ENCODE measurements at regions of chr20 and their contacts with region 1.

Region 1: GRCh38 chr20:40990542-40991120 is 38.0 kb upstream of the TOP1 start:
- DNase-seq: peak; percentile 71
- ATAC-seq: peak; percentile 20
- H3K4me3 ChIP-seq: no peak overlapping the region
- H3K4me3 Mint-ChIP-seq: peak overlapping the region; percentile 86
- H3K27ac ChIP-seq: peak overlapping the region; percentile 35 to 51
- H3K27ac Mint-ChIP-seq: peak overlapping the region; percentile 99
- H3K4me1 ChIP-seq: peaks cover 43 to 48% of the 10 kb centered on the region in 2 donors
- H3K4me1 Mint-ChIP-seq: peaks cover 51% of the 10 kb centered on the region
- H3K27me3 ChIP-seq: no peaks in the 10 kb centered on the region
- H3K27me3 Mint-ChIP-seq: no peaks in the 10 kb centered on the region
- CTCF ChIP-seq: peak; percentile 53

Region 2: DNA sequence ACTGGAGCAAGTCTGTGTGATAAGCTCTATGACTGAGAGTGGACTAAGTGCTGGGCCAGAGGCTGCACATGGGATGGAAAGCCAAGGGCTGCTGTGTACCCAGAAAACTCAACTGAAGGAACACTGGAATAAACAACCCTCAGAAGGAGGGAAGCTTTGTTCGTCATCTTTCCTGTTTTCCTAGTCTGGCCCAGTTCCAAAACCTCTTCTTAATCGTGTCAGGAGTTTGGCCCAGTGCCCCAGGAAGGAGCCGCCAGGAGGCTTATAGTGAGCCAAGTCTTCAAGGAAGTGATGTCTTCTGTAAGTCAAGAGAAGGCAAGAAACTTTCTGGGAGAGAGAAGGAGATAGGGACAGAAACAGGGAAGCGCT is 14.7 kb after region 1 on chr20:
- CTCF ChIA-PET with region 1: interaction called, 36 read pairs
- POLR2A ChIA-PET with region 1: interaction called, 7 read pairs
- intact Hi-C with region 1: no loop called
- DNase-seq: no peak
- ATAC-seq: no peak
- H3K4me3 ChIP-seq: no peak overlapping the region
- H3K4me3 Mint-ChIP-seq: no peak overlapping the region
- H3K27ac ChIP-seq: no peak overlapping the region
- H3K27ac Mint-ChIP-seq: no peak overlapping the region
- H3K4me1 ChIP-seq: peaks cover 17 to 26% of the 10 kb centered on the region in 2 donors
- H3K4me1 Mint-ChIP-seq: peaks cover 33% of the 10 kb centered on the region
- H3K27me3 ChIP-seq: no peaks in the 10 kb centered on the region
- H3K27me3 Mint-ChIP-seq: no peaks in the 10 kb centered on the region
- CTCF ChIP-seq: no peak

Region 3: DNA sequence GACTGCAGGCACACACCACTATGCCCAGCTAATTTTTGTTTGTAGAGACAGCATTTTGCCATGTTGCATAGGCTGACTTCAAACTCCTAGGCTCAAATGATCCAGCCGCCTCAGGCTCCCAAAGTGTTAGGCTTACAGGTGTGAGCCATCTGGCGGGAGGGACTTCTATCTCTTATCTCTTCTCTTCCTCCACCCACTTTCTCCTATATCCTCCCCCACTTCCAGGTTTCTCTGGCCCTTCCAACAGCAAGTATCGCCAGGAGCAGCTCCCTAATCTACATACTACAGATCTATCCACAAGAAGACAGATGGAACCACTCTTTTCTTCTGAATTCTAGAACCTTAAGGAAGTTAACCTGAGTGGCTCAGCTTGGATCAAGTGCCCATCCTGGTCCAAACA is 32.9 kb after region 1 on chr20:
- CTCF ChIA-PET with region 1: interaction called, 19 read pairs
- POLR2A ChIA-PET with region 1: interaction called, 6 read pairs
- intact Hi-C with region 1: loop called (anchors 1 kb)
- DNase-seq: no peak
- ATAC-seq: no peak
- H3K4me3 ChIP-seq: no peak overlapping the region
- H3K4me3 Mint-ChIP-seq: no peak overlapping the region
- H3K27ac ChIP-seq: no peak overlapping the region
- H3K27ac Mint-ChIP-seq: no peak overlapping the region
- H3K4me1 ChIP-seq: peaks cover 6 to 9% of the 10 kb centered on the region in 2 donors
- H3K4me1 Mint-ChIP-seq: peaks cover 13% of the 10 kb centered on the region
- H3K27me3 ChIP-seq: no peaks in the 10 kb centered on the region
- H3K27me3 Mint-ChIP-seq: no peaks in the 10 kb centered on the region
- CTCF ChIP-seq: no peak

Region 4: DNA sequence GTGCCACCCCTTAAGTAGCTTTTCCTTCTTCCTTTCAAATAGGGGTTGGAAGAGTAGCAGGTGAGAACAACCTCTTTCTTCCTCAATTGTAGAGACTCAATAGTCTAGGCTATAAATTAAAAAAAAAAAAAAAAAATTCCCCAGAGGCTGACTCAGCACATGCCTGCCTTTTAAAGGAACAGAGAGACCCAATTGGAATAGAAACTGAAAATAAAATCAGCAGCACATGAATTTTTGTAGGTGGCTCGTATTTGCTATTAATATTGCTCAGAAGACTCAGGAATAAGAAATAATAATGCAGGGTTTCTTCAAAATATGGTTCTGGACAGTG is 57.3 kb after region 1 on chr20:
- CTCF ChIA-PET with region 1: interaction called, 71 read pairs
- POLR2A ChIA-PET with region 1: interaction called, 4 read pairs
- intact Hi-C with region 1: loop called (anchors 1 kb)
- DNase-seq: peak; percentile 75
- ATAC-seq: peak; percentile 73
- H3K4me3 ChIP-seq: peak overlapping the region in 3 of 5 experiments; percentile 24 to 48 (median 27)
- H3K4me3 Mint-ChIP-seq: peak overlapping the region; percentile 80
- H3K27ac ChIP-seq: peak overlapping the region; percentile 3 to 14
- H3K27ac Mint-ChIP-seq: peak overlapping the region; percentile 80
- H3K4me1 ChIP-seq: peaks cover 56 to 62% of the 10 kb centered on the region in 2 donors
- H3K4me1 Mint-ChIP-seq: peaks cover 80% of the 10 kb centered on the region
- H3K27me3 ChIP-seq: no peaks in the 10 kb centered on the region
- H3K27me3 Mint-ChIP-seq: no peaks in the 10 kb centered on the region
- CTCF ChIP-seq: no peak

Region 5: GRCh38 chr20:41086402-41087338 is 96.0 kb after region 1 on chr20:
- CTCF ChIA-PET with region 1: interaction called, 174 read pairs
- POLR2A ChIA-PET with region 1: no interaction called
- intact Hi-C with region 1: no loop called
- DNase-seq: no peak
- ATAC-seq: no peak
- H3K4me3 ChIP-seq: no peak overlapping the region
- H3K4me3 Mint-ChIP-seq: no peak overlapping the region
- H3K27ac ChIP-seq: no peak overlapping the region
- H3K27ac Mint-ChIP-seq: peak overlapping the region; percentile 16
- H3K4me1 ChIP-seq: no peaks in the 10 kb centered on the region
- H3K4me1 Mint-ChIP-seq: no peaks in the 10 kb centered on the region
- H3K27me3 ChIP-seq: no peaks in the 10 kb centered on the region
- H3K27me3 Mint-ChIP-seq: no peaks in the 10 kb centered on the region
- CTCF ChIP-seq: no peak

Region 6: GRCh38 chr20:41136680-41137613 is 146.3 kb after region 1 on chr20 and contains the start of gene PLCG1:
- CTCF ChIA-PET with region 1: interaction called, 10 read pairs
- POLR2A ChIA-PET with region 1: no interaction called
- intact Hi-C with region 1: loop called (anchors 1 kb)
- DNase-seq: peak; percentile 89
- ATAC-seq: peak; percentile 75
- H3K4me3 ChIP-seq: peak within 1 kb of the TSS; percentile 7 to 83 (median 71)
- H3K4me3 Mint-ChIP-seq: peak within 1 kb of the TSS; percentile 93
- H3K27ac ChIP-seq: peak within 1 kb of the TSS; percentile 45 to 73
- H3K27ac Mint-ChIP-seq: peak within 1 kb of the TSS; percentile 91
- H3K4me1 ChIP-seq: peaks cover 43 to 62% of the 10 kb centered on the region in 2 donors
- H3K4me1 Mint-ChIP-seq: peaks cover 66% of the 10 kb centered on the region
- H3K27me3 ChIP-seq: no peaks in the 10 kb centered on the region
- H3K27me3 Mint-ChIP-seq: no peaks in the 10 kb centered on the region
- CTCF ChIP-seq: no peak
- total RNA-seq, gene PLCG1: 98.7 and 106 TPM in 2 replicates

Measured in B cell (primary cell).